ENCODE measurements at regions of chr2 and their contacts with region 1.

Region 1: DNA sequence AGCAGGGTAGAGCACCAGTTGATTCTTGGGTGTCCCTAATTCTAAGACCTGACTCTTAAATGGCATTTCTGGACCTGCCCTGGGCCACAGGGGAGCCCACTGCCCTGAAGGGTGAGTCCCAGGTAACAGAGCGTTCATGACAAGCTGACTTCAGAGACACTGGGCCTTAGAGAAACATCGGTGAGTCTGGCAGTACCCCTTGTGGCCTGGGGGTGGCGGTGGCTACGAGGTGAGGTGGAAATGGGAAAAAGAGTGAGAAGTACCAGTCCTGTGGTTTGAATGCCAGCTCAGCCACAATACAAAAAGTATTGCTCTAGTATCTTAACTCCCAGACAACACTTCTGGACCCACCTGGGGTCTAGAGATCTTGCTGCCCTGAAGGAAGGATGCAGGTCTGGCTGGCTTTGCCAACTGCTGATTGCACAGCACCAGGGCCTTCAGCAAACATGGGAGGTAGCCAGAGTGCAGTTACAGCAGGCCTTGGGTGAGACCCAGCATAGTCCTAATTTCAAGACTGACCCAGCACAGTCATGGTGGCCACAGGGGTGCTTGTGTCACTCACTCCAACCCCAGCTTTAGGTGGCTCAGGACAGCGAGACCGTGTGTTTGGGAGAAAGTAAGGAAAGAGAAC is 44.5 kb downstream of the USP34 start:
- DNase-seq: peak; percentile 57 to 86 (median 69)
- ATAC-seq: peak; percentile 91
- H3K4me3 ChIP-seq: no peak overlapping the region
- H3K4me3 Mint-ChIP-seq: peak overlapping the region; percentile 44
- H3K27ac ChIP-seq: peak overlapping the region in 1 of 2 donors; percentile 72
- H3K27ac Mint-ChIP-seq: peak overlapping the region; percentile 96
- H3K4me1 ChIP-seq: peaks cover 38% of the 10 kb centered on the region
- H3K4me1 Mint-ChIP-seq: peaks cover 73% of the 10 kb centered on the region
- H3K27me3 ChIP-seq: no peaks in the 10 kb centered on the region
- H3K27me3 Mint-ChIP-seq: no peaks in the 10 kb centered on the region
- CTCF ChIP-seq: peak; percentile 81

Region 2: GRCh38 chr2:61065715-61066709 is 360.4 kb before region 1 on chr2 and contains the start of gene SANBR:
- CTCF ChIA-PET with region 1: no interaction called
- POLR2A ChIA-PET with region 1: no interaction called
- intact Hi-C with region 1: no loop called
- DNase-seq: peak; percentile 59 to 93 (median 78)
- ATAC-seq: peak; percentile 97
- H3K4me3 ChIP-seq: peak within 1 kb of the TSS; percentile 63
- H3K4me3 Mint-ChIP-seq: peak within 1 kb of the TSS; percentile 99
- H3K27ac ChIP-seq: peak within 1 kb of the TSS in 1 of 2 donors; percentile 30
- H3K27ac Mint-ChIP-seq: peak within 1 kb of the TSS; percentile 68
- H3K4me1 ChIP-seq: peaks cover 11% of the 10 kb centered on the region
- H3K4me1 Mint-ChIP-seq: peaks cover 7% of the 10 kb centered on the region
- H3K27me3 ChIP-seq: no peaks in the 10 kb centered on the region
- H3K27me3 Mint-ChIP-seq: no peaks in the 10 kb centered on the region
- CTCF ChIP-seq: no peak
- total RNA-seq, gene SANBR: 1.1 to 1.3 TPM

Region 3: GRCh38 chr2:61443342-61444041 is 17.1 kb after region 1 on chr2:
- CTCF ChIA-PET with region 1: interaction called, 11 read pairs
- POLR2A ChIA-PET with region 1: no interaction called
- intact Hi-C with region 1: no loop called
- DNase-seq: peak in 2 of 14 experiments; percentile 25 to 46
- ATAC-seq: no peak
- H3K4me3 ChIP-seq: no peak overlapping the region
- H3K4me3 Mint-ChIP-seq: peak overlapping the region; percentile 18
- H3K27ac ChIP-seq: no peak overlapping the region
- H3K27ac Mint-ChIP-seq: no peak overlapping the region
- H3K4me1 ChIP-seq: peaks cover 39% of the 10 kb centered on the region
- H3K4me1 Mint-ChIP-seq: peaks cover 72% of the 10 kb centered on the region
- H3K27me3 ChIP-seq: no peaks in the 10 kb centered on the region
- H3K27me3 Mint-ChIP-seq: no peaks in the 10 kb centered on the region
- CTCF ChIP-seq: no peak

Region 4: DNA sequence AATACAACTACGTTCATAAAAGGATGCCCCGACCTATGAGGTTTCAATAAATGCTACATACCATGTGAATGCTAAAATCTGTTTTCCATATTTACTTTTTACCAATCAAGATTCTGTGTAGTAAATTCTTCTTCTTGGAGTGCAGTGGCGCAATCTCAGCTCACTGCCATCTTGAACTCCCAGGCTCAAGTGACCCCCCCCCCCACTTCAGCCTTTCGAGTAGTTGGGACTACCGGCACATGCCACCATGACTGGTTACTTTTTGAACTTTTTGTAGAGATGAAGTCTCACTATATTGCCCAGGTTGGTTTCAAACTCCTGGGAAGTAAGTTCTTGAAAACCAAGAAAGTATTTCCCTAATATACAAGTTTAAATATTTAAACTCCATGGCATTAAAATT is 58.9 kb after region 1 on chr2:
- CTCF ChIA-PET with region 1: interaction called, 7 read pairs
- POLR2A ChIA-PET with region 1: no interaction called
- intact Hi-C with region 1: loop called (anchors 5 kb)
- DNase-seq: no peak
- ATAC-seq: no peak
- H3K4me3 ChIP-seq: no peak overlapping the region
- H3K4me3 Mint-ChIP-seq: no peak overlapping the region
- H3K27ac ChIP-seq: no peak overlapping the region
- H3K27ac Mint-ChIP-seq: no peak overlapping the region
- H3K4me1 ChIP-seq: no peaks in the 10 kb centered on the region
- H3K4me1 Mint-ChIP-seq: no peaks in the 10 kb centered on the region
- H3K27me3 ChIP-seq: no peaks in the 10 kb centered on the region
- H3K27me3 Mint-ChIP-seq: no peaks in the 10 kb centered on the region
- CTCF ChIP-seq: no peak

Region 5: GRCh38 chr2:61632276-61633169 is 206.1 kb after region 1 on chr2:
- CTCF ChIA-PET with region 1: no interaction called
- POLR2A ChIA-PET with region 1: no interaction called
- intact Hi-C with region 1: loop called (anchors 1 to 5 kb)
- DNase-seq: no peak
- ATAC-seq: no peak
- H3K4me3 ChIP-seq: no peak overlapping the region
- H3K4me3 Mint-ChIP-seq: no peak overlapping the region
- H3K27ac ChIP-seq: no peak overlapping the region
- H3K27ac Mint-ChIP-seq: no peak overlapping the region
- H3K4me1 ChIP-seq: no peaks in the 10 kb centered on the region
- H3K4me1 Mint-ChIP-seq: no peaks in the 10 kb centered on the region
- H3K27me3 ChIP-seq: no peaks in the 10 kb centered on the region
- H3K27me3 Mint-ChIP-seq: no peaks in the 10 kb centered on the region
- CTCF ChIP-seq: no peak

Region 6: DNA sequence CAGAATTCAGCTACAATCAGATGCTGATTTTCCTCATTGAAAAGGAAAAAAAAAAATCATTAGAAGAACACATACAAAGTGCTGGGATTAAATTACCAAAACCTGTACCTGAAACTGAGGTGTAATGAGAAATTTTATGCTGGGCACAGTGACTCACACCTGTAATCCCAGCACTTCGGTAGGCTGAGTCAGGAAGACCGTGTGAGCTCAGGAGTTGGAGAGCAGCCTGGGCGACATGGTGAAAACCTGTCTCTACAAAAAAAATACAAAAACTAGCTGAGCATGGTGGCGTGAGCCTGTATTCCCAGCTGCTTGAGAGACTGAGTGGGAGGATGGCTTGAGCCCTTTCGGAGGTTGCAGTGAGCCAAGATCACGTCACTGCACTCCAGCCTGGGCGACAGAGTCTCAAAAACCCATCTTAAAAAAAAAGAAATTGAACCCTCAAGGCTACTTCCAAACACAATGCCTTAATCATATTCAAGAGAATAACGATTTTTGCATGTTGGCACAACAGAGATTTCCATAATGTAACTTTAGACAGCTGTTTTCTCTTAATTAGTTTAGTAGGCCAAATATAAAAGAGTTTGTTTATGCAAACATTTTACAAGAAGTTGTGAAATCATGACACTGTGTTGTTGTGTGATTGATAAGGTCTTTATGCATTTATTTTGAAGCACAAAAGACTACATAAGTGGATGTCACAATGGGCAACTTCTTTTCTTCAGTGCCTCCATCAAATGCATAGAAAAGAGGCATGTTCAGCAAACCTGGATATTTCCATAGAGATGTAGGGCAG is 363.6 kb after region 1 on chr2:
- CTCF ChIA-PET with region 1: no interaction called
- POLR2A ChIA-PET with region 1: no interaction called
- intact Hi-C with region 1: loop called in 1 of 2 experiments (anchors 2 kb)
- DNase-seq: no peak
- ATAC-seq: no peak
- H3K4me3 ChIP-seq: no peak overlapping the region
- H3K4me3 Mint-ChIP-seq: no peak overlapping the region
- H3K27ac ChIP-seq: no peak overlapping the region
- H3K27ac Mint-ChIP-seq: no peak overlapping the region
- H3K4me1 ChIP-seq: peaks cover 4% of the 10 kb centered on the region
- H3K4me1 Mint-ChIP-seq: no peaks in the 10 kb centered on the region
- H3K27me3 ChIP-seq: no peaks in the 10 kb centered on the region
- H3K27me3 Mint-ChIP-seq: peaks cover 19% of the 10 kb centered on the region
- CTCF ChIP-seq: no peak